Heart right ventricle (tissue), 16 donors: ENCODE measurements at regions of chr10 and their contacts with region 1.

Region 1: DNA sequence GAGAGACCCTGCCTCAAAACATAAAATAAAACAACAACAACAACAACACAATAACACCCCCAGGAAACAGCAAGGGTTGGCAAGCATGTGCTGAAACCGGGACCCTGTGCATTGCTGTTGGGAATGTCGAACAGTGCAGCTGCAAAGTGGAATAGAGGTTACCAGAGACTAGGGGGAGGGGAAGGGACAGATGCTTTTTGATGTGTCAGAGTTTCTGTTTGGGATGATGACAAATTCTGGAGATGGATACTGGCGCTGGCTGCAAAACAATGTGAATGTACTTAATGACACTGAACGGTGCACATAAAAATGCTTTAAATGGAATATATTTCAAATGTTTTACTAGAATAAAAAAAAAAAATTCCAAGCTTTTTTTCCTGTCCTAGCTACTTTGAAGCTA is 241.8 kb downstream of the TEX36 start:
- DNase-seq: no peak
- ATAC-seq: no peak
- H3K4me3 ChIP-seq: no peak overlapping the region
- H3K27ac ChIP-seq: no peak overlapping the region
- H3K4me1 ChIP-seq: no peaks in the 10 kb centered on the region
- H3K27me3 ChIP-seq: peaks cover 0 to 17% (median 0%) of the 10 kb centered on the region in 7 donors
- CTCF ChIP-seq: no peak

Region 2: DNA sequence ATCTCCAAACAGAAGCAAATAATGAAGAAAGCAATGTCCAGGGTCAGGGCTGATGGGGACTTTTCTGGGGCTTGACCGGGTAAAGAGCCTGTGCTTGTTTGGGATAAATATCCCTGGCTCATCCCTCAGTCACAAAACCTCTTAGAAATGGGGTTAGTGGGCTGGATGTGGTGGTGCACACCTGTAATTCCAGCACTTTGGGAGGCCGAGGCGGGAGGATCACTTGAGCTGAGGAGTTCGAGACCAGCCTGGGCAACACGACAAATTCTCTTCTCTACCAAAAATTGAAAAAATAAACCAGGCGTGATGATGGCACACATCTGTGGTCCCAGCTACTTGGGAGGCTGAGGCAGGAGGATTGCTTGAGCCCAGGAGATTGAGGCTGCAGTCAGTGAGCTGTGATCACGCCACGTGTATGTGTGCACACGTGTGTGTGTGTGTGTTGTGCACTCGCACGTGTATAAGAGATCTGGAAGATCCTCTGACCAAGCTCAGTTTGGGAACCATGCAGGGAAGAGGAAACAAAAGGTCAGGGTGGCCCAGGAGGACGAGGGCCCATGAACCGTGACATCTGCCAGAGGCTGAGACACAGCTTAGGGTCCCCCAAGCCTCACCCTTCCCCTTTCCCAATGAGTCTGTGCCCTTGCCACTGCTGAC is 16.8 kb before region 1 on chr10:
- intact Hi-C with region 1: loop called in 1 of 10 experiments (anchors 1 kb)
- DNase-seq: no peak
- ATAC-seq: no peak
- H3K4me3 ChIP-seq: no peak overlapping the region
- H3K27ac ChIP-seq: no peak overlapping the region
- H3K4me1 ChIP-seq: no peaks in the 10 kb centered on the region
- H3K27me3 ChIP-seq: peaks cover 0 to 15% (median 0%) of the 10 kb centered on the region in 7 donors
- CTCF ChIP-seq: no peak